ENCODE measurements at regions of chr22 and their contacts with region 1.

Region 1: GRCh38 chr22:39474351-39475111 is 17.7 kb downstream of the MGAT3 start:
- DNase-seq: peak; percentile 18
- ATAC-seq: peak; percentile 74
- H3K4me3 ChIP-seq: no peak overlapping the region
- H3K27ac ChIP-seq: peak overlapping the region; percentile 71
- H3K4me1 ChIP-seq: peaks cover 40% of the 10 kb centered on the region
- H3K27me3 ChIP-seq: no peaks in the 10 kb centered on the region
- CTCF ChIP-seq: no peak
- POLR2A ChIP-seq: no peak
- RAD21 ChIP-seq: no peak

Region 2: DNA sequence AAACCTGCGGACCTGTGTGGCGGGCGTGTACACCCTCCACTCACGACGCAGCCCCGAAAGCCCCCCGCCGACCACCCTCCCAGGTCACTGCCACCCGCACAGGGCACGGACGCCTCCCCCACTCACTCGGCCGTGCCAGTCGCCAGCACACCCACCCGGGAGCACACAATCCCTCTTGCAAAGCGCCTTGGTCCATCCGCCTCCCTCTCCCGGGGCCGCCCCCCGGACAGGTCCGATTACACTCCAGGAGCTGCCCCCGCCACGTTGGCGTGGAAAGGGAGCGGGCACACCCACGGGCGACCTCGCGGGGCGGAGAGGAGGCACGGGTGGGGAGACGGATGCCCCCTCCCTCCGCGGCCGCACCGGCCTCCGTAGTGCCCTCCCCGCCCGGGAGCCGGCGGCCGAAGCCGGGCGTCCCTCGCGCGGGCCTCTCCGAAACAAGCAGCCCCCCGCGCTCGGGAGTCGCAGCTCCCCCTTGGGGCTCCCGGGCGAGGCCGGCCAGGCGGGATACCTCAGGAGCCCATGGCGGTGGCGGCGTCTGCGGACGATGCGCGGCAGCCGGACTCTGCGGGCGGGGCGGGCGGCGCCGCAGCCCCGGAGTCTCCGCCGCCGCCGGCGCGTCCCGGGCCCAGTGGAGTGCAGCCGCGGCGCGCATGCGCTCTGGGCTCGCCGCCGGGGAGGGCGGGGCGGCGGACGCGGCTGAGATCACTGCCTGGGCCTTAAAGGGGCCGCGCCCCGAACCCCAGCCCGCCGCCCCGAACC is 1202.0 kb before region 1 on chr22 and contains the start of gene TMEM184B:
- CTCF ChIA-PET with region 1: no interaction called
- POLR2A ChIA-PET with region 1: interaction called, 11 read pairs
- dilution Hi-C with region 1: no loop called
- in situ Hi-C with region 1: no loop called
- intact Hi-C with region 1: no loop called
- DNase-seq: peak; percentile 58
- ATAC-seq: peak; percentile 95
- H3K4me3 ChIP-seq: peak within 1 kb of the TSS; percentile 96
- H3K27ac ChIP-seq: peak within 1 kb of the TSS; percentile 97
- H3K4me1 ChIP-seq: peaks cover 19% of the 10 kb centered on the region
- H3K27me3 ChIP-seq: no peaks in the 10 kb centered on the region
- CTCF ChIP-seq: no peak
- POLR2A ChIP-seq: peak; percentile 86
- RAD21 ChIP-seq: 0 out of 2 replicates have a peak, but pooled peaks have one; percentile 6
- total RNA-seq, gene TMEM184B: 9.1 and 9.2 TPM in 2 replicates

Region 3: DNA sequence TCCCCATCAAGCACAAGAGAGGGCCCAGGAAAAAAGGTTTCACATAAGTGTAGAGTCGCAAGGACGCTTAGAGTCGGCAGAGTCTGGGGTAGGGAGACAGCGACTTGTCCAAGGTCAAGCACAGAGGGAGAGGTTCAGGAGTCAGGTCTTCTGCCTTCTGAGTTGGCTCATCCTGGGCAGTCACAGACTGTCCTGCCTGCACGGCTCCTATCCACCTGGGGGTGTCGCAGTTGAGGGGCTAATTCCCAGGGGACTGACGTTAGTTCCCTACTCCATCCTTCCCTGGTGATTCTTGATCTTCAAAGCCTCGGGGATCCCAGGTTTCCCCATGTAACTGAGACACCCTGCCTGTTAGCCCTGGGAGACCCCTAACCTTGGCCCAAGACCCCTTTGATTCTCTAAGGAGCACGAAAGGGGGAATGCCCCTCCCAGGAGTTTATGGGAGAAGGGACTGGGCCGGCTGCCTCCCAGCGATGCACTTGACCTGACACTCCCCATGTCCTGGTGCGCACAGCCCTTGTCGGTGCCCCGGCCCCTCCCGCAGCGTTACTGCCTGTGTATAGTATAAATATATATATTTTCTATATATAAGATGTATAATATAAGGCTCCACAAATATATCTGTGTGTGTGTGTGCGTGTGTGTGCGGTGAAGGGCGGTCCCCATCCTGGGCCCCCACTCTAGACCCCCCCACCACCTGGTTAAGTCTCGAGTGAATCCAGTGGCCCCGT is 89.6 kb before region 1 on chr22:
- CTCF ChIA-PET with region 1: no interaction called
- POLR2A ChIA-PET with region 1: no interaction called
- dilution Hi-C with region 1: no loop called
- in situ Hi-C with region 1: no loop called
- intact Hi-C with region 1: no loop called
- DNase-seq: peak; percentile 28
- ATAC-seq: peak; percentile 18
- H3K4me3 ChIP-seq: no peak overlapping the region
- H3K27ac ChIP-seq: no peak overlapping the region
- H3K4me1 ChIP-seq: peaks cover 11% of the 10 kb centered on the region
- H3K27me3 ChIP-seq: no peaks in the 10 kb centered on the region
- CTCF ChIP-seq: peak; percentile 50
- POLR2A ChIP-seq: no peak
- RAD21 ChIP-seq: peak; percentile 35

Region 4: GRCh38 chr22:39490135-39490798 is 15.7 kb after region 1 on chr22:
- CTCF ChIA-PET with region 1: interaction called, 3 read pairs
- POLR2A ChIA-PET with region 1: interaction called, 3 read pairs
- dilution Hi-C with region 1: no loop called
- in situ Hi-C with region 1: no loop called
- intact Hi-C with region 1: loop called (anchors 1 kb)
- DNase-seq: peak; percentile 65
- ATAC-seq: peak; percentile 79
- H3K4me3 ChIP-seq: no peak overlapping the region
- H3K27ac ChIP-seq: no peak overlapping the region
- H3K4me1 ChIP-seq: peaks cover 8% of the 10 kb centered on the region
- H3K27me3 ChIP-seq: no peaks in the 10 kb centered on the region
- CTCF ChIP-seq: no peak
- POLR2A ChIP-seq: no peak
- RAD21 ChIP-seq: no peak

Region 5: DNA sequence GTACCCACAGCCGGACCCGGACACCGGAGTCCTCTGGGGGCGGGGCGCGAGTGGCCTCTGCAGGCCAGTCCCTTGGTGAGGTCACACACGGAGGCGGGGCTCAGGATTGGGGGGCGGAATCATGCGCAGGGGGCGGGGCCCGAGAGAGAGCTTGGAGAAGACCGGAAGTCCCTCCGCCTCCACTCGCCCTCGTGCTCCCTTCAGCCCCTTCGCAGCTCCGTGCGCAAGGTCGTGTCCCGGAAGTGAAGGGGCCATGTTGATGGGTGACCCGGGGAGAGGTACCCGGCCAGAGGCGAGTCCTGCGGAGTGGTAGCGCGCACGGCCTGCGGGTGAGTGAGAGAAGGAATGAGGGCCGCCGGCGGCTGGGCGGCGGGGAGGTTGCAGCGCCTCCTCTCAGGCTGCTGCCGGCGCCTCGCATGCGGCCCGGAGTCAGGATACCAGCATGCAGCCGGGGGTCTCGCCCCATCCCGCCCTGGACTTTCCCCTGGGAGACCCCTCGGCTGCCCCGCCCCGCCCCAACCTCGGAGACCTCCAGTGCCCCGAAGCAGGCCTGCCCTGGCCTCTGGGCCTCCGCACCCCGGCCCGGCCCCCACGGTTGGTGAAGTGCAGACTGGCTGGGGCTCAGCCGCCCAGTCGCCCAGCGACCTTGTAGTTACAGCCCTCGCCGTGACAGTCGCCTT is 27.7 kb after region 1 on chr22 and contains the start of gene MIEF1:
- CTCF ChIA-PET with region 1: no interaction called
- POLR2A ChIA-PET with region 1: interaction called, 23 read pairs
- dilution Hi-C with region 1: no loop called
- in situ Hi-C with region 1: no loop called
- intact Hi-C with region 1: no loop called
- DNase-seq: peak; percentile 92
- ATAC-seq: peak; percentile 97
- H3K4me3 ChIP-seq: peak within 1 kb of the TSS; percentile 67
- H3K27ac ChIP-seq: peak within 1 kb of the TSS; percentile 45
- H3K4me1 ChIP-seq: peaks cover 10% of the 10 kb centered on the region
- H3K27me3 ChIP-seq: no peaks in the 10 kb centered on the region
- CTCF ChIP-seq: no peak; the same call in 1 of the 2 replicates
- POLR2A ChIP-seq: no peak
- RAD21 ChIP-seq: no peak
- total RNA-seq, gene MIEF1: 9.7 and 12.2 TPM in 2 replicates